ENCODE measurements at regions of chr1 and their contacts with region 1.

Region 1: GRCh38 chr1:43934101-43934985 is 742 bp downstream of the ARTN start:
- DNase-seq: peak; percentile 32
- H3K4me3 Mint-ChIP-seq: no peak overlapping the region
- H3K27ac Mint-ChIP-seq: no peak overlapping the region
- H3K4me1 Mint-ChIP-seq: peaks cover 8% of the 10 kb centered on the region
- H3K27me3 Mint-ChIP-seq: peaks cover 14% of the 10 kb centered on the region

Region 2: DNA sequence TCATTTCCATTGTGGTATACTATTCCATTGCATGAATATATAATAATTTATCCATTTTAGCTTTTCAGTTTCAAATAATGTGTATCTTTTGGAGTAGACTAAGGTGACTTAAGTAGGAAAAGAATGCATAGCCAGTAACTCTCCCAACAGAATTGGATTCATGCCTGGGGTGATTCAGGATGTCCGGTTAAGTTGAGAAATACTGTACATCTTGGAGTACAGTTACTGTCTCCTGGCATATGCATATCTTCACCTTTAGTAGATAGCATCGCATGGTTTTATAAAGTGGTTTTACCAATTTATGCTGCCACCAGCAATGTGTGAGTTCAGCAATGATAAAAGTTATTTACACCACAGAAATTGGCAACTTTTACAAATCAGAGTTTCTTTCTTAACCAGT is 115.5 kb after region 1 on chr1:
- intact Hi-C with region 1: loop called (anchors 5 kb)
- DNase-seq: no peak
- H3K4me3 Mint-ChIP-seq: no peak overlapping the region
- H3K27ac Mint-ChIP-seq: no peak overlapping the region
- H3K4me1 Mint-ChIP-seq: peaks cover 16% of the 10 kb centered on the region
- H3K27me3 Mint-ChIP-seq: peaks cover 3% of the 10 kb centered on the region

Measured in activated T-helper 1 cell treated with anti-CD3 and anti-CD28 coated beads, Interleukin-12 subunit alpha, Interleukin-12 subunit beta, Interleukin-2, Interleukin-4 antibody, amounts not matched to agents 30 ng/mL and 10 ng/mL and 1 ng/mL, durations not matched to agents 14 hours and 24 hours and 36 hours (primary cell).